ENCODE measurements at regions of chr21 and their contacts with region 1.

Region 1: GRCh38 chr21:35428489-35428888 is 379.4 kb upstream of the RUNX1 start:
- DNase-seq: peak; percentile 15 to 74 (median 60)
- ATAC-seq: peak; percentile 95
- H3K4me3 ChIP-seq: peak overlapping the region; percentile 23
- H3K4me3 Mint-ChIP-seq: peak overlapping the region; percentile 58 to 86 (median 76)
- H3K27ac ChIP-seq: no peak overlapping the region
- H3K27ac Mint-ChIP-seq: peak overlapping the region in 6 of 9 donors; percentile 33 to 88 (median 66)
- H3K4me1 ChIP-seq: peaks cover 6 to 24% of the 10 kb centered on the region in 2 donors
- H3K4me1 Mint-ChIP-seq: peaks cover 11 to 30% (median 26%) of the 10 kb centered on the region in 7 donors
- H3K27me3 ChIP-seq: peaks cover 0 to 17% of the 10 kb centered on the region in 2 donors
- H3K27me3 Mint-ChIP-seq: peaks cover 0 to 16% (median 11%) of the 10 kb centered on the region in 5 donors

Region 2: DNA sequence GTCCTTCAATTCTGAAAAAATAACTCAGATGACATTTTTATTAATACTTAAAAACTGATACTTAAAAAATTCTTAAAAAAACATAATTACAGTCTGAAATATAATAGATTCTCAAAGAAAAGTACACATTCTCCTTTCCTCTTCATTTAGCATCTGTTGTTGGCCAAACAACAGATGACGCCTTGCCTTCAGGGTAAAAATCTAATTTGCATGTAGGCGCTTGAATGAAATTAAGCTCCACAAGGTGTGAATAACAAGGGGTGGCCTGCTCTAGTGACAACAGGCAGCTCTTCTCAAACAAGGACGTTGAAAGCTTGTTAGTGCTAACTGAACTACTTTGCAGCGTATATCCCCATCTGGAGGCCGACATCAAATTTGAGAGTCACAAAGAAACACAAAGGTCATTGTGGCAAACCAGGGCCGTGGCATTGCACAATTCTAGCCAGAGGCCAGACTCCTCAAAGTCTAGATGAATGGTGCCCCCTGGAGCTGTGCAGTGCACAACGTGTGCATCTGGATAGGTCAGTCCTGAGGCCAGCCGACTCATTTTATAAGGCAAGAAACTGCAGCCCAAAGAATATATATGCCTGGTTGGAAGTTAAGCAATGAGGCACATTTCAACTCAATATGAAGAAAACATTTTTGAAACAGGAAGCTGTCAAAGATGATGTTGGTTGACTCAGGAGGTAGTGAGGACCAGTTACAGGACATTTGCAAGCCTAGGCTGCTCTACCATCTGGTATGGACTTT is 79.8 kb after region 1 on chr21:
- CTCF ChIA-PET with region 1: no interaction called
- POLR2A ChIA-PET with region 1: interaction called, 5 read pairs
- intact Hi-C with region 1: loop called in 1 of 2 experiments (anchors 2 kb)
- DNase-seq: peak in 2 of 9 donors; percentile 18 to 25
- ATAC-seq: peak; percentile 77
- H3K4me3 ChIP-seq: no peak overlapping the region
- H3K4me3 Mint-ChIP-seq: peak overlapping the region in 1 of 10 donors; percentile 23
- H3K27ac ChIP-seq: no peak overlapping the region
- H3K27ac Mint-ChIP-seq: peak overlapping the region in 6 of 9 donors; percentile 38 to 70 (median 60)
- H3K4me1 ChIP-seq: peaks cover 0 to 37% of the 10 kb centered on the region in 2 donors
- H3K4me1 Mint-ChIP-seq: peaks cover 30 to 77% (median 70%) of the 10 kb centered on the region in 7 donors
- H3K27me3 ChIP-seq: no peaks in the 10 kb centered on the region
- H3K27me3 Mint-ChIP-seq: peaks cover 0 to 3% (median 0%) of the 10 kb centered on the region in 5 donors

Region 3: DNA sequence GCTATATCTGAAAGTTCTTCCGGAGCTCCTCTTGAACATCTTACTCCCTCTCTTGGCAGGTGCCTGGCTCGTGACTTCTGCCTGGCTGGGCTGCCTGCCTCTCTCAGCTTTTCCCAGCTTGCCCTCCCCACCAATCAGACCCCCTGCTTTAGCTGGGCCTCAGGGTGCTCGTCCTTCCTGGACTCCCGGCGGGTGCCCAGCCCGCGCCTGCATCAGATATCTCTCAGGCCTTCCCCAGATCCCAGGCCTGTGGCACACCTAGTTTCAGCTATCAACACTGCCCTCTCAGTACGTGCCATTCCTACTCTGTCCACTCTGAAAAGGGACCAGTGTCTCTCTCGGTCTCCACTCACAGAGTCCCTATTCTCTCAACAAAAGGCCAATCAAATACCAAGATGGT is 1148.0 kb after region 1 on chr21:
- CTCF ChIA-PET with region 1: no interaction called
- POLR2A ChIA-PET with region 1: no interaction called
- intact Hi-C with region 1: no loop called
- DNase-seq: no peak
- ATAC-seq: no peak
- H3K4me3 ChIP-seq: no peak overlapping the region
- H3K4me3 Mint-ChIP-seq: no peak overlapping the region
- H3K27ac ChIP-seq: no peak overlapping the region
- H3K27ac Mint-ChIP-seq: no peak overlapping the region
- H3K4me1 ChIP-seq: no peaks in the 10 kb centered on the region
- H3K4me1 Mint-ChIP-seq: peaks cover 0 to 7% (median 4%) of the 10 kb centered on the region in 7 donors
- H3K27me3 ChIP-seq: no peaks in the 10 kb centered on the region
- H3K27me3 Mint-ChIP-seq: peaks cover 0 to 9% (median 0%) of the 10 kb centered on the region in 5 donors